ENCODE measurements at regions of chr1 and their contacts with region 1.

Region 1: DNA sequence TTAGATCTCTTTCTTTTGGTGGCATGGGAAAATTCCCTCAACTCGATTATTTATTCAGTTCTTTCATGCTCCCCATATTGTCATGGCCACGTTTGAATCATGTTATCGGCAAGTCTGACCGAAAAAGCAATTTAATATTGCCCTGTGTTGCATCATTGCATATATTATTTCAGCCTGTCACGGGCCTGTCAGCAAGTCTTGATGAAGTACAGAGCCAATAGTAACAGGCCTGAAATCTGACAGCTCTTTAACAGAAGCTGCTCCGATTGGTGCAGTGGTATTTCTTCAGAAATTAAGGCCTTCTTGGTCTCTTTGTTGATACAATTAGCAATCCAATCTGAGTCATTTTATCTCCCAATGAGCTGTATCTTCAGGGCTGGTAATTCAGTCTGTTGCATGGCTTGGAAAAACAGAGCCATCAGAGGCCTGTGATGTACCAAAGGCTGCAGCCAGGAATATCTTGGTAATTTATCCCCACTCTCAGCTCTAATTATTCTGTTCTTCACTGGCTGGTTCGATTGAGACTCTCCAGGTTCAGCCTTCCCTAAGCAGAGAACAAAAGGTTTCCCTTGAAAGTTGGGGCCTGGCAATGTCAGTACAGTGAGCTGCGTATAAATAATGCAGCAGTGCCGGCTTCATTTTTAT is 149.5 kb downstream of the FGGY start:
- DNase-seq: peak; percentile 89
- H3K4me3 ChIP-seq: no peak overlapping the region
- H3K27ac ChIP-seq: peak overlapping the region; percentile 68 to 85 (median 80)
- H3K4me1 ChIP-seq: peaks cover 0 to 62% (median 48%) of the 10 kb centered on the region in 4 donors
- H3K27me3 ChIP-seq: no peaks in the 10 kb centered on the region
- CTCF ChIP-seq: no peak
- EP300 ChIP-seq: peak; percentile 41 to 93 (median 81)
- POLR2A ChIP-seq: no peak

Region 2: GRCh38 chr1:58903514-58904298 is 542.7 kb before region 1 on chr1:
- intact Hi-C with region 1: loop called (anchors 5 kb)
- DNase-seq: peak; percentile 98
- H3K4me3 ChIP-seq: peak overlapping the region; percentile 38 to 56 (median 53)
- H3K27ac ChIP-seq: peak overlapping the region; percentile 93 to 96 (median 96)
- H3K4me1 ChIP-seq: peaks cover 0 to 46% (median 26%) of the 10 kb centered on the region in 4 donors
- H3K27me3 ChIP-seq: no peaks in the 10 kb centered on the region
- CTCF ChIP-seq: no peak
- EP300 ChIP-seq: peak in 3 of 4 donors; percentile 42 to 84 (median 72)
- POLR2A ChIP-seq: peak; percentile 85 to 88

Region 3: GRCh38 chr1:59150577-59151391 is 295.6 kb before region 1 on chr1:
- intact Hi-C with region 1: loop called (anchors 5 kb)
- DNase-seq: peak; percentile 96
- H3K4me3 ChIP-seq: peak overlapping the region in 2 of 4 donors; percentile 24 to 30
- H3K27ac ChIP-seq: peak overlapping the region; percentile 77 to 87 (median 82)
- H3K4me1 ChIP-seq: peaks cover 0 to 35% (median 29%) of the 10 kb centered on the region in 4 donors
- H3K27me3 ChIP-seq: no peaks in the 10 kb centered on the region
- CTCF ChIP-seq: no peak
- EP300 ChIP-seq: peak; percentile 23 to 87 (median 79)
- POLR2A ChIP-seq: no peak

Region 4: DNA sequence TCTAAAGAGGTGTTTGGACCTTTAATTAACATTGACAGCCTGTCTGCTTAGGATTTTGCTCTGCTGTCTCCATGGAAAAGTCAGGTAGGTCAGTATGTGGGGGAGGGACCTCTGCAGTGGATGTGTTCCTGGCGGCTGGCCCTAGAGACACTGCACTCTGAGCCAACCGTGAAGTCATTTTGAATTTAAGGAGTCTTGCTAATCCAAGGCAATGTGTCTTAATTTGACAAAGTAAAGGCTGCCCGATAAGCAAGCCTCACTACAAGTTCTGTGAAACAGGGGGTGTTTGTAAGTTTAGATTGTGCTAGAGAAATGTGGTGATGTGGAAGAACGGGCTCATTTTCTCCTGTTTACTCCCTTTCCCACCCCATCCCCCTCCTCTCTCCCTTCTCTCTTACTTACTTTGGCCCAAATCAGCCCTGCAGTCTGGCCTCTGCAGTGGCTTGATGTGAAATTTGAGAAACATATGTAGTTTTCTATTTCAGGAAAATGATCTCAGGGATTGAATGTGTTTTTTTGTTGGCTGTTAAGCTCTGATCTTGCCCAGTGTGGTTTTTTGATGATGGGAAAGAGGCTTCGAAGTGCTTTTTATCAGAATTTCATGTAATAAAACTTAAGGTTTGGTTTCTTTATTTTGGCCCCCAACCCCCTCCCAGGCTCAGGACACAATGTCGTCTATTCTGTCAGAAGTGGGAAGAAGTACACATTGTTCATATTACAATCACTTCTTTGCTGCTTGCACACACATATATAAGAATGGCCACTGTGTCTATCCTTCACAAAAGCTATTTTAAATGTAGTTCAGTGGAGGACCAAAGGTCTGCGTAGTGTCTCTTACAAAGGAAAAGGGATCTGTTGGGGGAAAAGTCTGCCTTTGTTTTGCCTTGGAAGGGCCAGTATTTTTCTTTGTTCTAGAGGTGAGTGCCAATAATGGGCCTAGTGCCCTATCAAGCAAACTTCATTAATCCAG is 52.9 kb before region 1 on chr1:
- intact Hi-C with region 1: loop called (anchors 2 kb)
- DNase-seq: peak; percentile 95
- H3K4me3 ChIP-seq: no peak overlapping the region
- H3K27ac ChIP-seq: peak overlapping the region; percentile 78 to 88 (median 88)
- H3K4me1 ChIP-seq: peaks cover 0 to 37% (median 30%) of the 10 kb centered on the region in 4 donors
- H3K27me3 ChIP-seq: no peaks in the 10 kb centered on the region
- CTCF ChIP-seq: no peak
- EP300 ChIP-seq: peak in 3 of 4 donors; percentile 14 to 36 (median 16)
- POLR2A ChIP-seq: no peak

Region 5: GRCh38 chr1:59500950-59501742 is 54.8 kb after region 1 on chr1:
- intact Hi-C with region 1: no loop called
- DNase-seq: no peak
- H3K4me3 ChIP-seq: no peak overlapping the region
- H3K27ac ChIP-seq: no peak overlapping the region
- H3K4me1 ChIP-seq: peaks cover 0 to 17% (median 14%) of the 10 kb centered on the region in 4 donors
- H3K27me3 ChIP-seq: no peaks in the 10 kb centered on the region
- CTCF ChIP-seq: no peak
- EP300 ChIP-seq: no peak
- POLR2A ChIP-seq: no peak

Region 6: GRCh38 chr1:59511476-59512465 is 65.4 kb after region 1 on chr1:
- intact Hi-C with region 1: loop called (anchors 2 kb)
- DNase-seq: no peak
- H3K4me3 ChIP-seq: no peak overlapping the region
- H3K27ac ChIP-seq: peak overlapping the region in 3 of 4 donors; percentile 30 to 41 (median 31)
- H3K4me1 ChIP-seq: peaks cover 0 to 72% (median 66%) of the 10 kb centered on the region in 4 donors
- H3K27me3 ChIP-seq: no peaks in the 10 kb centered on the region
- CTCF ChIP-seq: no peak
- EP300 ChIP-seq: no peak
- POLR2A ChIP-seq: no peak

Region 7: GRCh38 chr1:59596441-59596861 is 150.1 kb after region 1 on chr1:
- intact Hi-C with region 1: loop called (anchors 1 kb)
- DNase-seq: no peak
- H3K4me3 ChIP-seq: no peak overlapping the region
- H3K27ac ChIP-seq: peak overlapping the region; percentile 82 to 87 (median 82)
- H3K4me1 ChIP-seq: peaks cover 0 to 81% (median 61%) of the 10 kb centered on the region in 4 donors
- H3K27me3 ChIP-seq: no peaks in the 10 kb centered on the region
- CTCF ChIP-seq: no peak
- EP300 ChIP-seq: no peak
- POLR2A ChIP-seq: no peak

Region 8: DNA sequence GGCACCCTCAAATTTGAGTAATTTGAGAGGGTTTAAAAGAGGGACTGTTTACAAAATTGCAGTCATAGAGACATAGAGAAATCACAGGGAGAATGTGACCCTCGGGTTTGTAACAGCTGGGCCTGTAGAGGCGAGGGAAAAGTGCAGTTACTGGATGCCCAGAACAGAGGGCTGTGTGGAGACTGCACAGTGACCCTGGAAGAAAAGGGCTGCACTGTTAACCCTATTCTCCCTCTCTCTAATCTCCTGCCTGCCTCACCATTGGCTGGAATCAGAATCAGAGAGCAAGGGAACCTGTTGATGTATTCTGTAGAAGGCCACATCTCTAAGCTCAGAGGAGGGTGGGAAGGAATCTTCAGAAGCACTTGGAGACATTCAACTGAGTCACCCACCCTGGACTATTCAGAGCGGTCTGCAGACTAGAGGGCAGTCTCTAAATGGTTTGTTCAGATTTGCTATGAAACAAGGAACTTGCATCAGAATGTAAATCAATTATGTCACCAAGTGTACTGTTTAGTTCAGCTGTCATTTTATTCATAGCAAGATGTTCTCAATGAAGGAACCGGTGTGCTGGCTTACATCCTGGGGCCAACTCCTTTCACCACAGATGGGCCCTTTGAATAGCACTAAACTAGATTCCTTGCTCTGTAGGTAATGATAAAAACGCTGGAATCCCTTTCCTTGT is 236.2 kb after region 1 on chr1:
- intact Hi-C with region 1: loop called (anchors 5 kb)
- DNase-seq: peak; percentile 77
- H3K4me3 ChIP-seq: no peak overlapping the region
- H3K27ac ChIP-seq: peak overlapping the region; percentile 73 to 83 (median 79)
- H3K4me1 ChIP-seq: peaks cover 0 to 62% (median 33%) of the 10 kb centered on the region in 4 donors
- H3K27me3 ChIP-seq: no peaks in the 10 kb centered on the region
- CTCF ChIP-seq: no peak
- EP300 ChIP-seq: peak; percentile 41 to 91 (median 71)
- POLR2A ChIP-seq: no peak

Region 9: GRCh38 chr1:59692591-59692990 is 246.2 kb after region 1 on chr1:
- intact Hi-C with region 1: no loop called
- DNase-seq: no peak
- H3K4me3 ChIP-seq: no peak overlapping the region
- H3K27ac ChIP-seq: no peak overlapping the region
- H3K4me1 ChIP-seq: peaks cover 0 to 37% (median 8%) of the 10 kb centered on the region in 4 donors
- H3K27me3 ChIP-seq: no peaks in the 10 kb centered on the region
- CTCF ChIP-seq: no peak
- EP300 ChIP-seq: no peak
- POLR2A ChIP-seq: no peak